Mammary epithelial cell (primary cell): ENCODE measurements at regions of chr9 and their contacts with region 1.

Region 1: GRCh38 chr9:136644598-136645351 is 17.9 kb upstream of the EGFL7 start:
- DNase-seq: no peak
- H3K4me3 ChIP-seq: no peak overlapping the region
- H3K27ac ChIP-seq: no peak overlapping the region
- H3K4me1 ChIP-seq: peaks cover 10% of the 10 kb centered on the region
- H3K27me3 ChIP-seq: peaks cover 4% of the 10 kb centered on the region
- CTCF ChIP-seq: peak; percentile 80 to 87

Region 2: DNA sequence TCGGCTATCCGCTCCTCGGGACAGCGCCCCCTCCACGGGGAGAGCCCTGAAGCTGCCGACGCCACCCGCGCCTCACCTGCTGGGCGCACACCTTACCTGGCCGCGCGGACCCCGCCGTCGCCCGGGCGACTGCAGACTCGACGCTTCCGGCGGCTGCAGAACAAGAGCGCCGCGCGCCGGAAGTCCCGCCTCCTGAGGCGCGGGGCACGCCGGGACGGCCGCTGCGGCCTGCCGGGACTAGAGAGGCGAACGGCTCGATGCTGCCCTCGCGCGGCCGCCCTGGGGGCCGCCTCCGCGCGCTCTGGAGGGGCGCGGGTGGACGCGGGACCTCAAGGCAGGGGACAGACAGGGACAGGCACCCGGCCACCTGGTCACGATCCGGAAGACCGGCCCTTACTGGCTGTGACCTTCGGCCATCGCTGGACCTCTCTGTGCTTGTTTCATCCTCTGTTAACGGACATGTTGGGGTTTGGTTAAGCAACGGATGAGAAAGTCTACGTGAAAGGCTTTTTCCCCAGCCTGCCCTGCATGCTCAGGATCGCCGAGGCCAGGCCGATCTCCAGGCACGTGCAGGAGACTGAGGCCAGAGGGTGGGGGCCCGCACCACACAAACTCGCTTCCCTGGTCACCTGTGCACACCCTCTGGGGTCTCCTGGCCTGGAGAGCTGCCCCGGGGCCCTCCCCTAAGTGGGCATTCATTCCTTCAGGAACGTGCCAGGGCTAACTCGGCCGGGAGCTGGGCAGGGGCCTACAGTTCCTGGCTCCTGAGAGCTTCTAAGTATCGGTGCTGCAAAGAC is 244.5 kb before region 1 on chr9 and contains the start of gene SNAPC4:
- CTCF ChIA-PET with region 1: no interaction called
- dilution Hi-C with region 1: no loop called
- in situ Hi-C with region 1: no loop called
- intact Hi-C with region 1: loop called (anchors 5 kb)
- DNase-seq: peak; percentile 78
- H3K4me3 ChIP-seq: peak within 1 kb of the TSS; percentile 84 to 97 (median 89)
- H3K27ac ChIP-seq: peak within 1 kb of the TSS; percentile 64
- H3K4me1 ChIP-seq: peaks cover 15% of the 10 kb centered on the region
- H3K27me3 ChIP-seq: no peaks in the 10 kb centered on the region
- CTCF ChIP-seq: peak; percentile 72 to 79
- total RNA-seq, gene SNAPC4: 7.0 to 9.2 TPM

Region 3: GRCh38 chr9:136539427-136540421 is 105.1 kb before region 1 on chr9:
- CTCF ChIA-PET with region 1: no interaction called
- dilution Hi-C with region 1: loop called (anchors 5 kb)
- in situ Hi-C with region 1: no loop called
- intact Hi-C with region 1: no loop called
- DNase-seq: no peak
- H3K4me3 ChIP-seq: no peak overlapping the region
- H3K27ac ChIP-seq: no peak overlapping the region
- H3K4me1 ChIP-seq: peaks cover 46% of the 10 kb centered on the region
- H3K27me3 ChIP-seq: no peaks in the 10 kb centered on the region
- CTCF ChIP-seq: no peak

Region 4: DNA sequence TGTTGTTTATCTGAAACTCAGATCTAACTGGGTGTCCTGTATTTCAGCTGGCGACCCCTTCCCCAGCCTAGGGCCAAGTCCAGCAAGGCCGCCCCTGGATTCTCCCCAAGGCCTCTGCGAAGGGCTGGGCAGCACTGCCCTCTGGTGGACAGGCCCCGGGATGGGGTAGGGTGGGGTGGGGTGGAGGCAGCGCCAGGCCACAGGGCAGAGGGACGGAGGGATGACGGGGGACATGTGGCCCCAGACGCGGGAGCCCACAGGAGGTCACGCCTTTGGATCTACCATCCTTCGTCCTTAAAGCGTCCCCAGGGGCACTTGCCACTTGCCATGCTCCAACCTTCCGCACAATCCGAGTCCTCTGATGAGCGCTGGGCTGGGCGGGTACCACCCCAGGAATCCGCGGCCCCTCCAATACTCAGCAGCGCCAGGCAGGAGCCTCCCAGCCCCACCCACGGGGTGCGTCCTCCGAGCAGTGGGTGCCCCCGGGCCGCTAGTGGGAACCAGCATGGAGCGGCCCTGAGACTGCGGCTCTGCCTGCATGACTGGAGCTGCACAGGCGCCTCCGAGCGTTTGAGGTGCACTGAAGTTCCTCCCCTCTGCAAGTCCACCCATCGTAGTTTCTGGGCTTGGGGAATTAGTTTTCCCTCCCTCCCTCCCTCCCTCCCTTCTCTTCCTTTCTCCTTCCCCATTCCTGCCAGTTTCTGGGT is 49.6 kb after region 1 on chr9:
- CTCF ChIA-PET with region 1: no interaction called
- dilution Hi-C with region 1: no loop called
- in situ Hi-C with region 1: no loop called
- intact Hi-C with region 1: loop called (anchors 2 kb)
- DNase-seq: peak; percentile 37
- H3K4me3 ChIP-seq: peak overlapping the region in 1 of 3 experiments; percentile 0
- H3K27ac ChIP-seq: peak overlapping the region; percentile 9
- H3K4me1 ChIP-seq: peaks cover 41% of the 10 kb centered on the region
- H3K27me3 ChIP-seq: no peaks in the 10 kb centered on the region
- CTCF ChIP-seq: peak; percentile 49 to 86